ENCODE measurements at regions of chr2 and their contacts with region 1.

Region 1: GRCh38 chr2:17309741-17310339 is 208.4 kb downstream of the RAD51AP2 start:
- DNase-seq: peak; percentile 39
- CTCF ChIP-seq: peak; percentile 75

Region 2: GRCh38 chr2:16773080-16773713 is 536.6 kb before region 1 on chr2:
- CTCF ChIA-PET with region 1: interaction called, 49 read pairs
- POLR2A ChIA-PET with region 1: no interaction called
- DNase-seq: peak; percentile 43
- CTCF ChIP-seq: peak; percentile 60

Region 3: DNA sequence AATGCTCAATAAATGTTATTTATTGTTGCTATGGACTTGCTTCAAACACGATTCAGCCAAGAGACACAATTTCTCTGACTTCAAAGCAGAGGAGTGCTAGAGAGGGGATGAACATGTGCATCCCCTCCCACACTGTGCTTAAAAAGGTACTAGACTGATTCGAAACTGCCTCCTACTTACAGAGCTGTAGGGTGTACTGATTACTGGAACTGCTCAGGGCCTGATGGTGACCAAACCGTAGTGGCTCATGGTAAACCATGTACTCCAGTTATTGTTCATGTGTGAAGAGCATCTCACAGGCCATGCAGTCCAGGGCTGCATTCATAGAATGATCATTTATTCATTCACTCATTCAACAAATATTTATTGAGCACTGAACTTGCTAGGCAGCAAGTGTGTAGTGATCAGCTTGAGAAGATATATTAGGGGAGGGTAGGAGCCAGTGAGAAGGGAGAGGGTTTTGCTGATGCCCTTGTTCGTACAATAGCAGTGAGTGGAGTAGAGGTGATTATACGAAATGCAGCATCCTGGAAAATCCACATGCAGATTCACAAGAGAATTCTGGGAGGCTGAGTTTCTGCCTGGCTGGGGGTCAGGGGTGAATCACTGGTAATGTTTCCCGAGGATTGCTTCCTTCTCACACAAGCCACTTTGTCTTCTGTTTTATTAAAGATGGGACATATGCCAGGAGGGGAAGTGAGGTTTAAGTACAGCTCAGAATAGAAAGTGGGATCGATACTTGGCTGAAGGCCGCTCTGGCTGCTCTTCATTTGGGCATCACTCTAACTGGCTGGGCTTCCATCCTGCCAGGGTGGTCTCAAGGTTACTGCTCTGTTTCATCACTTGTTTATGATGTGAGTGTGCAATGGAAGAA is 37.0 kb before region 1 on chr2:
- CTCF ChIA-PET with region 1: interaction called, 10 read pairs
- POLR2A ChIA-PET with region 1: no interaction called
- DNase-seq: no peak
- CTCF ChIP-seq: no peak

Region 4: GRCh38 chr2:17282245-17282644 is 27.6 kb before region 1 on chr2:
- CTCF ChIA-PET with region 1: interaction called, 12 read pairs
- POLR2A ChIA-PET with region 1: no interaction called
- DNase-seq: no peak
- CTCF ChIP-seq: no peak

Region 5: DNA sequence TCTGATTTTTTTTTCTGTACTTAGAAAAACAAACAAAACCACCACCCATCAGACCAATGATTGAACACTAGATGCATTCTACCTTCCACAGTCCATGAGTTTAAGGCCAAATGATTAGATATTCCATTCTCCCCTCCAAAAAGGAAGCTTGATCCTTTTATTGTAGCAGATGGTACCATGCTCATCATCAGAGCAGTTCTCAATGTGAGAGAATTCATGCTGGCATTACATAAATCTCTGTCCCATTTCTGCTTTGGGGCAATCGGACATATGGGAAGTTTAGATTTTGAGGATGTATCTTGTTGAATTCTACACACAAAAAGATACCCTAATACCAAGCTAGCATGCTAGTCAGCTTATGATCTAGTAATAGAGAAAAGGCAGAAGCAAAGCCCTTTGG is 21.8 kb after region 1 on chr2:
- CTCF ChIA-PET with region 1: interaction called, 62 read pairs
- POLR2A ChIA-PET with region 1: no interaction called
- DNase-seq: no peak
- CTCF ChIP-seq: no peak

Region 6: GRCh38 chr2:17337507-17337906 is 27.7 kb after region 1 on chr2:
- CTCF ChIA-PET with region 1: interaction called, 28 read pairs
- POLR2A ChIA-PET with region 1: no interaction called
- DNase-seq: no peak
- CTCF ChIP-seq: no peak

Region 7: DNA sequence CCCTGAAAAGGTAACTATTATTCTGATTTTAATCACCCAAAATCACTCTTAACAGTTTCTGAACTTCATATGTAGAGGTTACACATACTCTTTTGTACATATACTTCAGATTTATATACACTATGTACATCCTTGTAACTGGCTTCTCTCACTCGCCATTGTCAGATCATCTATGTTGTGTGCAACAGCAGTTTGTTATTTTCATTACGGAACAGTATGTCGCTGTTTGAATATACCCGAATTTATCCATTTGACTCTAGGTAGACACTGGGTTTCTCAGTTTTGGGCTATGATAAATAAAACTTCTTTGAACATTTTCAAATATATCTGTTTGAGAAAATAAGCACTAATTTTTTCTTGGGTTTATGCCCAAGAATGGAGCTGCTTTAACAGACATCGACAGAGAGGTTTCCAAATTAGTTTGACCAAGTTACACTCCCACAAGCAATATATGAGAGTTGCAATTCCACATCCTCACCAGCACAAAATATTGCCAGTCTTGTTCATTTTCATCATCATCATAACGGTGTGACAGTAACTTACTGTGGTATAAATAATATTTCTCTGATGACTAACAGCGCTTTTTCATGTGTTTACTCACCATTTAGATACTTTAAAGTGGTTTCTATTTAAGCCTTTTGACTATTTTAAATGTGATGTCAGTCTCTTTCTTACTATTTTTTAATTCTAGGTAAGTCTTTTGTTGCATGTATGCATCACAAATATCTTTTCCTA is 362.9 kb after region 1 on chr2:
- CTCF ChIA-PET with region 1: interaction called, 24 read pairs
- POLR2A ChIA-PET with region 1: no interaction called
- DNase-seq: no peak
- CTCF ChIP-seq: no peak

Measured in GM10248 (cell line).